ENCODE measurements at regions of chr9 and their contacts with region 1.

Region 1: DNA sequence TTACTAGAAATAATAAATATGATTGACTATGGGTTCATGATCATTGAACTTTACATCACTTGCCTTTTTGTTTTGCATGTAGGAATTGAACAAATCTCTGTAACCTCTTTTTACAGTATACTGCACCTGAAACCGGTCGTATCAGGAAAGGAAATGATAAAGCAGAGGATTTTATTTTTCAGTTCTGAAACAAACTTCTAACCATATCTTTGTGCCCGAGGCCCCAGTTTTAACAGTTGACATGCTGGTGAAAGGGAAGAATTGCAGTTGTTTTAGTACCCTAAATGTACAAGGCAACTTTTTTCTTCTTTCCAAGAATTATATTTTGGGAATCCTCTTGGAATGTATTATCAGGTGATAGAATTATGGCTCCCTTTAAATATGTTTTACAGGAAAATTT is 27.8 kb downstream of the TMEM38B start:
- DNase-seq: no peak
- H3K4me3 ChIP-seq: no peak overlapping the region
- H3K27ac ChIP-seq: no peak overlapping the region
- H3K4me1 ChIP-seq: no peaks in the 10 kb centered on the region
- H3K27me3 ChIP-seq: no peaks in the 10 kb centered on the region
- CTCF ChIP-seq: no peak

Region 2: GRCh38 chr9:106218854-106219253 is 496.8 kb after region 1 on chr9:
- CTCF ChIA-PET with region 1: no interaction called
- POLR2A ChIA-PET with region 1: interaction called, 22 read pairs
- intact Hi-C with region 1: no loop called
- DNase-seq: no peak
- H3K4me3 ChIP-seq: no peak overlapping the region
- H3K27ac ChIP-seq: no peak overlapping the region
- H3K4me1 ChIP-seq: no peaks in the 10 kb centered on the region
- H3K27me3 ChIP-seq: no peaks in the 10 kb centered on the region
- CTCF ChIP-seq: no peak

Measured in PC-9 (cell line).